Activated CD8-positive, alpha-beta T cell treated with anti-CD3 and anti-CD28 coated beads for 36 hours (primary cell): ENCODE measurements at regions of chr2 and their contacts with region 1.

Region 1: DNA sequence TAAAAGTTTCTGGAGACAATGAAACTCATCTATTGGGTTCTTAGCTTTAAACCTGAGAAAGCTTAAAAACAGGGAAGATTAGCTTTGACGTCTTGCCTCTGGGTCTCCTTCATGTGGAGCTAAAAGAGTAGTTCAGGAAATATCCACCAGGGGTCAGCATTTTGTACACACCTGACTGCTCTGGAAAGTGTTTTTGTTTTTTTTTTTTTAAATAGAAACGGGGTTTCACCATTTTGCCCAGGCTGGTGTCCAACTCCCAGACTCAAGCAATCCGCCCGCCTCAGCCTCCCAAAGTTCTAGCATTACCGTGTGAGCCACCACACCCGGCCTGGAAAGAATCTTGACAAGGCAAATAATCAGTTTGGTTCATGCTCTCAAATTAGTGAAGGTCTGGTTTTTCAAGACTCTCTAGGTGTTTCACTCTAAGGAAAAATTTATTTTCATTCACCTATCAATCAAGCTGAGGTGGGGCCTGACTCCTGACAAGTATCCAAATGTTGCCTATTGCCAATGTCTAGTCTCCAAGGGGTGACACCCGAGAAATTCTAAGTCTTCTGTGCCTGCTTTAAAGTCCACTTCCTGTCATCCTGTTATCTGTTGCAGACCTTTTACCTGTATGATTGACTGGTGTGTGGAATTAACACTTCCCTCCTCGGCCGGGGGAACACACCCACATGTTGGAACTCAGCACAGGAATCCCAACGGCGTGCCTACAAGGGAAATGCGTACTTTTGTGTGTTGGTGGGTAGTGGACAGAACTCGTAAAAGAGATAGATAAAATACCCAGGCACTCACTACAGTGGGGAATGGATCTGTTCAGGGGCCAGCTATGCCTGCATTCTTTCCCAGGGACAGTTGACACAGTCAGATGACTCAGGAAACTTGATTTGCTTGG is 11.3 kb downstream of the IL1RN start:
- DNase-seq: peak; percentile 62
- ATAC-seq: peak; percentile 84
- H3K4me3 Mint-ChIP-seq: peak overlapping the region; percentile 20
- H3K27ac Mint-ChIP-seq: peak overlapping the region; percentile 75
- H3K4me1 Mint-ChIP-seq: peaks cover 26% of the 10 kb centered on the region
- H3K27me3 Mint-ChIP-seq: no peaks in the 10 kb centered on the region
- CTCF ChIP-seq: peak; percentile 86

Region 2: DNA sequence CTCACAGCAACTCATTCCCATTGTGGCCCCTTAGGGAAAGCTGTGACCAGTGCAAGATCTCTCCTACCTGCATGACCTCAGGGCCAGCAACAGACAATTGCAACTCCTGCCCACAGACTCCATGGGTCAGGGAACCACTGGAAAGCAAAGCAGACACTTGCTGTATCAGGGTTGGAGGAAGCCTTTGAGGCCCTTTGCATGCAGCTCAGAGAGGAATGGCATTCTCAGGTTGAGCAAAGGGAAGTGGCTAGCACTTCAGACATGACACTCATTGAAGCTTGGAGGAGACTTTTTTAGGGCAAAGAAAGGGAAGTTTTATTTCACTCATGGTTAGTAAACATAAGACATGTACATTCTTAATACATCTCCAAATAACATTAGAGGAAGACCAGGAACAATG is 48.8 kb before region 1 on chr2:
- CTCF ChIA-PET with region 1: interaction called, 190 read pairs
- POLR2A ChIA-PET with region 1: no interaction called
- intact Hi-C with region 1: no loop called
- DNase-seq: no peak
- ATAC-seq: no peak
- H3K4me3 Mint-ChIP-seq: no peak overlapping the region
- H3K27ac Mint-ChIP-seq: no peak overlapping the region
- H3K4me1 Mint-ChIP-seq: no peaks in the 10 kb centered on the region
- H3K27me3 Mint-ChIP-seq: no peaks in the 10 kb centered on the region
- CTCF ChIP-seq: no peak

Region 3: GRCh38 chr2:113124181-113124961 is 14.3 kb before region 1 on chr2:
- CTCF ChIA-PET with region 1: interaction called, 146 read pairs
- POLR2A ChIA-PET with region 1: interaction called, 3 read pairs
- intact Hi-C with region 1: no loop called
- DNase-seq: peak; percentile 48
- ATAC-seq: peak; percentile 76
- H3K4me3 Mint-ChIP-seq: peak overlapping the region; percentile 24
- H3K27ac Mint-ChIP-seq: no peak overlapping the region
- H3K4me1 Mint-ChIP-seq: peaks cover 35% of the 10 kb centered on the region
- H3K27me3 Mint-ChIP-seq: peaks cover 6% of the 10 kb centered on the region
- CTCF ChIP-seq: no peak

Region 4: DNA sequence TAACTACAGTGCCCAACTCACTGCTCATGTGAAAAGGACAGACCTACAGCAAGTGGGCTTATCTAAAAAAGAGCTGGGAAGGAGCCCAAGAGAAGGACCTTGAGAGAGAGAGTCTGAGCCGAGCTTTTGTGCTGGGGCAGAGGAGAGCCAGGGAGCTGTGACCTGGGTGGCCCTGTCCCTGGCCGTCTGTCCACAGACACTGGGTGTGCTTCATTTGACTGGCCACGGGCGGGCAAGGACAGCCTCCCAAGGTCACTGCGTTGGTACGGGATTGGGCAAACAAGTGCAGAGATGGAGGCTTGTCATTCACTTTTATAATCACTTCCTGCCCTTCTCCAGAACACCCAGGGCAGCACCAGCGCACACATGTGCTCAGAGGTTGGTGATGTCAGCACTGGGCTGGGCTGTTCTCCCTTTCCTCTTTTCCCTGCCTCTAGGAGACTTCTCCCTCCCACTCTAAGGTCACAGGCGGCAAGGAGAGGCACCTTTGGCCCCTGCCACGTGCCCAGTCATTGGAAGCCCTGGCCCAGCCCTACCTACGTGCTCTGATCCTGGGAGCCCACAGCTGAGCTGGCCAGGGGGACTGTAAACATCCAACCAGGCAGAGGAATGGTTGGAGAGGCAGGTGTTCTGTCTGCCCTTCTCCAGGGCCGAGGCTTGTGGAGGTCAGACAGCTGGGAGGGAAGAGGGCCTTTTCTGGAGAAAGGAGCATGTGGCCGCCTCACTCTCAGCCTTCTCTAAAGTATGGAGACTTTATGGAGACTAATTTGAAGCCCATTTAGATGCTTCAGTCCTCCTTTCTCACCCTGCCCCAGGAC is 28.6 kb after region 1 on chr2:
- CTCF ChIA-PET with region 1: interaction called, 127 read pairs
- POLR2A ChIA-PET with region 1: interaction called, 3 read pairs
- intact Hi-C with region 1: no loop called
- DNase-seq: peak; percentile 60
- ATAC-seq: peak; percentile 76
- H3K4me3 Mint-ChIP-seq: peak overlapping the region; percentile 51
- H3K27ac Mint-ChIP-seq: peak overlapping the region; percentile 96
- H3K4me1 Mint-ChIP-seq: peaks cover 70% of the 10 kb centered on the region
- H3K27me3 Mint-ChIP-seq: no peaks in the 10 kb centered on the region
- CTCF ChIP-seq: no peak

Region 5: GRCh38 chr2:113198790-113199612 is 60.3 kb after region 1 on chr2:
- CTCF ChIA-PET with region 1: interaction called, 212 read pairs
- POLR2A ChIA-PET with region 1: interaction called, 4 read pairs
- intact Hi-C with region 1: loop called (anchors 2 kb)
- DNase-seq: peak; percentile 75
- ATAC-seq: peak; percentile 74
- H3K4me3 Mint-ChIP-seq: no peak overlapping the region
- H3K27ac Mint-ChIP-seq: no peak overlapping the region
- H3K4me1 Mint-ChIP-seq: peaks cover 9% of the 10 kb centered on the region
- H3K27me3 Mint-ChIP-seq: no peaks in the 10 kb centered on the region
- CTCF ChIP-seq: peak; percentile 69

Region 6: GRCh38 chr2:113240150-113240862 is 101.6 kb after region 1 on chr2:
- CTCF ChIA-PET with region 1: interaction called, 30 read pairs
- POLR2A ChIA-PET with region 1: no interaction called
- intact Hi-C with region 1: no loop called
- DNase-seq: no peak
- ATAC-seq: peak; percentile 57
- H3K4me3 Mint-ChIP-seq: no peak overlapping the region
- H3K27ac Mint-ChIP-seq: peak overlapping the region; percentile 81
- H3K4me1 Mint-ChIP-seq: peaks cover 16% of the 10 kb centered on the region
- H3K27me3 Mint-ChIP-seq: no peaks in the 10 kb centered on the region
- CTCF ChIP-seq: no peak

Region 7: GRCh38 chr2:113370478-113371091 is 231.9 kb after region 1 on chr2:
- CTCF ChIA-PET with region 1: interaction called, 11 read pairs
- POLR2A ChIA-PET with region 1: no interaction called
- intact Hi-C with region 1: no loop called
- DNase-seq: peak; percentile 79
- ATAC-seq: peak; percentile 97
- H3K4me3 Mint-ChIP-seq: no peak overlapping the region
- H3K27ac Mint-ChIP-seq: no peak overlapping the region
- H3K4me1 Mint-ChIP-seq: peaks cover 5% of the 10 kb centered on the region
- H3K27me3 Mint-ChIP-seq: peaks cover 4% of the 10 kb centered on the region
- CTCF ChIP-seq: peak; percentile 73